ENCODE measurements at regions of chr15 and their contacts with region 1.

Region 1: DNA sequence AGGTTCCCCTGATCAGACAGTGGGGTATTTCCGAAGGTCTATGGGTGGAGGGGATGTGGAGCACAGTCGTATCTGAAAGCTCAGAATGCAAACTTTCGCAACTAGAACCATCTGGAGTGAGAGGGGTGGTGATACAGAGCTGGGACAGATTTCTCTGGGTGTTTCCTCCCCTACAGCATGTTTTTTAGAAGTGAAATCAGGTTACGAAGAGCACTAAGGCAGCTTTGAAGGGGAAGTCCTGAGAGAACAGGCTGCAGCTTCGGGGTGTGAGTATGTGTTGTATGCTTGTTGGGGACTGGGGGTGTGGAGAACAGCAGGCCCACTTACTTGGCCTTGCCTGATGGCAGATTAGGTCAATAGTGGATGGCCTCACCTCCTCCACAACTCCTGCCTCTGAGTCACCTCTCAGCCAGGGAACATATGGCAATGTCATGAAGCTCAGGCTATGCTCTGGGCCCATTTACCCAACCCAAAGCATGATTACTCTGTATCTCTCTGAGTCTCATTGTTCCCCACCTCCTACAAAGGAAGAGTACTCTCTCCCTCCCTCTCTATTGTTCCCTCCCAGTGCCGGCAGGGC is 107.2 kb upstream of the RASGRP1 start:
- DNase-seq: no peak

Region 2: DNA sequence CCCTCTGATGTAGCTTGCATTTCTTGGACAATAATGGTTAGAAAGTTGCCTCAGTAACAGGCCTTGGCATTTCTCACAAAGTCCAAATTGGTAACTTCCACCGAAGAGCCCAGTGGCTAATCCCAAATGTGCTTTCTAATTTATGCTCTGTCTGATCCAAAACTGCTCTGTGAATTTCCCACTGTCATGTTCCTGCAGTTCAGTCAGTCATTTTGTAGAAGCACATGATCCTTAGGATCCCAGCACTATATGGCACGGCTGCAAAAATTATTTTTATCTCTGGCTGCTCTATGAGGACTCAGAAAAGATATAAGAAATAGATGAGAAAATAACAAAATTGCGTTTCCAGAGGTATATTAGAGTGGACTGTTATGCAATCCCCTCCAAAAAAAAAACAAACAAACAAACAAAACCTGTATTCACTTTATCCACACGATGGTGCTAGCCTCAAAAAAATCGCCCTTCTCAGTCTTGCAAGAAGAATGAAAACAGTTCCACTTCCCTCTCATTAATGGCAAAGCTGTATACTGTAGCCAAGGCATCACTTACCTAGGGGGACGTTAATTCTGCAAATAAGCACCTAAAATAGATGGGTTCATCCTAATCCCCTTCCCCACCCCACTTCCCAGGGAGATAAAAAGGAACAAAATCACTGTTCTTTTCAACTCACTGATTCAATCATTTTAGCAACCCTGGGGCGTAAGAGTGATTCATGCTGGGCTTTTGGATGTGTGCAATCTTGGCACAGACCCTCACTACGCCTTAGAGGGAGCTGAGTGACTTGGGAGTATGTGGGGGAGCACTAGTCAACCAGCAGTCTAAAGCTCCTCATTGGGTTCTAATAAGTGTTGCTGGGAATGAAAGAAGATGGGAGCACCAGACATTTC is 676.1 kb before region 1 on chr15:
- intact Hi-C with region 1: loop called (anchors 10 kb)
- DNase-seq: peak in 22 of 42 donors; percentile 34 to 83 (median 58)

Region 3: DNA sequence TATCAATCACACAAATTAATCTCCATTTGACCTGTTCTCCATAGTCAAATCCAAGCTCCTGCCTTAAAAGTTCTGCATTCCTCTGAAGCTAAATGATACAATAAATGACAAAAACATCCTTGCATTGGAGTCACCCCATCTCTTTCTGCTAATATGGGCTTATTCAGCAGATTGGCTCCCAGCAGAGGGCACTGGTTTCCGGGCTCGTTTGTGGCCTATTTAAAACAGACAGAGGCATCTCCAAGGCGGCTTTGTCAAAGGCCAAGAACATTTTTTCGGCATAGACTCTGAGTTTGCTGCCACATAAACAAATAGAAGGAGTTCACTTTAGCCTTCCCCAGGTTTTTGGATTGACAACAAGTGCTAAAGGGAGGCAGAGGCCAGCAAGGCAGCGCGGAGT is 97.2 kb after region 1 on chr15:
- intact Hi-C with region 1: no loop called
- DNase-seq: peak in 10 of 42 donors; percentile 2 to 44 (median 13)

Measured in head of caudate nucleus (tissue), 42 donors.